Activated CD4-positive, alpha-beta T cell treated with anti-CD3 and anti-CD28 coated beads for 36 hours (primary cell): ENCODE measurements at regions of chr22 and their contacts with region 1.

Region 1: DNA sequence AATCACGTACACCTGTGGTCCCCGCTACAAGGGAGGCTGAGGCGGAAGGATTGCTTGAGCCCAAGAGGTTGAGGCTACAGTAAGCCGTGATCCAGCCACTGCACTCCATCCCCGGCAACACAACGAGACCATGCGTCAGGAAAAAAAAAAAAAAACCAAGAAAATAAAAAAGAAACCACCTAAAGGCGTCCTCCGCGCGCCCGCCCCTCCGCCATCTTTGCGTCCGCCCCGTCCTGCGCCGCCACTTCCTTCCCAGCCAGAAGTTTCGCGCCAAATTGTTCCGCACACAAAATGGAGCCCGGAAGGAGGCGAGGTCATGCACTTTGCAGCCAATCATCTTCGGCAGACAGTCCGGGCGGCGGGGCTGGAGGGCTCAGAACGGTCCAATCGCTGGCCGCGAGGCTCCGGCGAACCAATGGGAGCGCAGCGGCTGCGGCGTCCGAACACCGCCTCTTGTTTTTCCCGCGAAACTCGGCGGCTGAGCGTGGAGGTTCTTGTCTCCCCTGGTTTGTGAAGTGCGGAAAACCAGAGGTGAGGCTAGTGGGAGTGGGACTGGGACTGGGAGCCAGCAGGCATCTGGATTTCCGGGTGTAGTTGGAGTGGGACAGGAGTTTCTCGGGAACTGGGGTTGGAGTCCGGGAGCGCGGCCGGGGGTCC is at the start of gene MCM5:
- DNase-seq: peak; percentile 99
- ATAC-seq: peak; percentile 100
- H3K4me3 Mint-ChIP-seq: peak within 1 kb of the TSS; percentile 86
- H3K27ac Mint-ChIP-seq: peak within 1 kb of the TSS; percentile 98
- H3K4me1 Mint-ChIP-seq: peaks cover 19% of the 10 kb centered on the region
- H3K27me3 Mint-ChIP-seq: no peaks in the 10 kb centered on the region
- total RNA-seq, gene MCM5: 291 to 382 TPM

Region 2: DNA sequence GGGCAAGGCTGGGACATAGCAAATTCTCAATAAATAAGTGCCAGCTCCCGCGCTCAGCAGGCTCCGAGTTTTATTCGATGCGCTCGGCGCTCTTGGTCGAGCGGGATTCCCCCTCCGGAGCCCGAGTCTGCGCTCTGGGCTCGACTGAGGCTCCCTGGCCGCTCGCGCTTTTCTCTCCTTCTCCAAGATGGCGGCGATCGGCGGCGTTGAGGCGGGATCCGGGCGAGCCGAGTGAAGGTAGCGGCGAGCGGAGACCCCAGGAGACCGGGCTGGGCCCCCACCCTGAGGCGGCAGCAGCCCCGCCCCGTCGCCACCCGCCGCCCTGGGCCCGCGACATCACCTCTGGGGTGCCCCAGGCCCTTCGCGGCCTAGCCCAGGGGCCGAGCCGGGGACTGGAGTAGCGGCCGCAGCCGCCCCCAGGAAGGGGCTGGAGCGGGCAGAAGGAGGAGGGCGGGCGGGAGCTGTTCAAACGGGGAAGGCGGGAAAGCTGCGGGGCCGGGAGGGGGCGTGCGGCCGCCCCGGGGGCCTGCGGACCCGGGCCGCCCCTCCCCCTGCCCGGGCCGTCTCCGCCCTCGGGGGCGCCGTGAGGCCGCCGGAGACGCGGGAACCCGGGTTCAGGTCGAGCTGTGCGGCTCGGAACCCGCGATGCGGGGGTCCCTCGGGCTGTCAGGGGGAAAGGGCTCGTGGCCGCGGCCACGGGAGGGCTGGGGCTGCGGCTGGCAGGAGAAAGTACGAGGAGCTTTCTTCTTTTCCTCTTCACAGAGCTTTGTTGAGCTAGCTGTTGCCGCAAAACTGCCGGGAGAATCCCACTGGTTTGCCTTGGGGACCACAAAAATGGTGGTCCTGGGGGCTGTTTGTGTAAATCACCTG is 142.2 kb before region 1 on chr22 and contains the start of gene HMGXB4:
- CTCF ChIA-PET with region 1: no interaction called
- POLR2A ChIA-PET with region 1: interaction called, 5 read pairs
- intact Hi-C with region 1: loop called in 1 of 2 experiments (anchors 1 kb)
- DNase-seq: peak; percentile 93
- ATAC-seq: peak; percentile 92
- H3K4me3 Mint-ChIP-seq: peak within 1 kb of the TSS; percentile 91
- H3K27ac Mint-ChIP-seq: peak within 1 kb of the TSS; percentile 90
- H3K4me1 Mint-ChIP-seq: peaks cover 26% of the 10 kb centered on the region
- H3K27me3 Mint-ChIP-seq: no peaks in the 10 kb centered on the region
- total RNA-seq, gene HMGXB4: 36.8 to 37.6 TPM

Region 3: GRCh38 chr22:35322126-35322525 is 77.7 kb before region 1 on chr22:
- CTCF ChIA-PET with region 1: no interaction called
- POLR2A ChIA-PET with region 1: no interaction called
- intact Hi-C with region 1: no loop called
- DNase-seq: no peak
- ATAC-seq: no peak
- H3K4me3 Mint-ChIP-seq: no peak overlapping the region
- H3K27ac Mint-ChIP-seq: no peak overlapping the region
- H3K4me1 Mint-ChIP-seq: no peaks in the 10 kb centered on the region
- H3K27me3 Mint-ChIP-seq: no peaks in the 10 kb centered on the region

Region 4: DNA sequence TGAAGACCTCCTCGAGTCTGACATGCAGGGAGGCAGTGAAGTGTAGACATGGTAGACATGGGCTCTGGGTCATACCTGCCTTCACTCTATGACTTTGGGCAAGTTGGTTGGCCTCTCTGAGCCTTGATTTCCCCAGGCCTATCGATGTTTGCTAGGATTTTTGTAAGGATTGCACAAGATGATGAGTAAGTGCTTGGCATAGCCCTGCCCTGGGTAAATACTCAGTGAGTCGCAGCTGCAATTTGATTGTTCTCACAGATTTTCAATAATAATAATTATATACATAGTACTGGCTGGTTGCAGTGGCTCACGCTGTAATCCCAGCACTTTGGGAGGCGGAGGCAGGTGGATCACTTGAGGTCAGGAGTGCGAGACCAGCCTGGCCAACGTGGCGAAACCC is 18.3 kb after region 1 on chr22:
- CTCF ChIA-PET with region 1: no interaction called
- POLR2A ChIA-PET with region 1: interaction called, 15 read pairs
- intact Hi-C with region 1: no loop called
- DNase-seq: no peak
- ATAC-seq: no peak
- H3K4me3 Mint-ChIP-seq: no peak overlapping the region
- H3K27ac Mint-ChIP-seq: no peak overlapping the region
- H3K4me1 Mint-ChIP-seq: no peaks in the 10 kb centered on the region
- H3K27me3 Mint-ChIP-seq: no peaks in the 10 kb centered on the region

Region 5: DNA sequence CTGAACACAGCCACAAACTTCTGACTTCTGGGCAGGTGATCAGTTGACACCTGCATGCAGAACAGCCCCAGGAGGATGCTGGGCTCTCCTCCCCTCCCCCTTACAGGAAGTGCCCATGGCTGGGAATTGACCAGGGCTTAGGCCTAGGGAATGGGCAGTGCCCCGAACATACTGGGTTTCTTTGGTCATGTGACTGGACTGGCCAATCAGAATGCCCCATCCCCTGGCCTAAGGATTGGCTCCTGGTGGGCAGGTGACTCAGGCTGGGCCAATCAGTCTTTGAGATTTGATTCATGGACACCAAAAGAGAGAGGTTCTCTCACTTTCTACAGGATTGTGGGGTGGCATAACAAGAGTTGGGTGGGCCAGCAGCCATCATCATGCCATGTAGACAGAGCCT is 37.2 kb after region 1 on chr22:
- CTCF ChIA-PET with region 1: no interaction called
- POLR2A ChIA-PET with region 1: no interaction called
- intact Hi-C with region 1: loop called in 1 of 2 experiments (anchors 2 kb)
- DNase-seq: peak; percentile 47
- ATAC-seq: peak; percentile 45
- H3K4me3 Mint-ChIP-seq: no peak overlapping the region
- H3K27ac Mint-ChIP-seq: no peak overlapping the region
- H3K4me1 Mint-ChIP-seq: no peaks in the 10 kb centered on the region
- H3K27me3 Mint-ChIP-seq: no peaks in the 10 kb centered on the region